Left ventricle myocardium inferior (tissue), 1 donor: ENCODE measurements at regions of chr11 and their contacts with region 1.

Region 1: GRCh38 chr11:1889224-1890120 is 2.2 kb downstream of the PRR33 start:
- DNase-seq: no peak
- H3K4me3 ChIP-seq: no peak overlapping the region
- H3K27ac ChIP-seq: no peak overlapping the region
- H3K4me1 ChIP-seq: peaks cover 26% of the 10 kb centered on the region
- H3K27me3 ChIP-seq: no peaks in the 10 kb centered on the region
- CTCF ChIP-seq: no peak

Region 2: DNA sequence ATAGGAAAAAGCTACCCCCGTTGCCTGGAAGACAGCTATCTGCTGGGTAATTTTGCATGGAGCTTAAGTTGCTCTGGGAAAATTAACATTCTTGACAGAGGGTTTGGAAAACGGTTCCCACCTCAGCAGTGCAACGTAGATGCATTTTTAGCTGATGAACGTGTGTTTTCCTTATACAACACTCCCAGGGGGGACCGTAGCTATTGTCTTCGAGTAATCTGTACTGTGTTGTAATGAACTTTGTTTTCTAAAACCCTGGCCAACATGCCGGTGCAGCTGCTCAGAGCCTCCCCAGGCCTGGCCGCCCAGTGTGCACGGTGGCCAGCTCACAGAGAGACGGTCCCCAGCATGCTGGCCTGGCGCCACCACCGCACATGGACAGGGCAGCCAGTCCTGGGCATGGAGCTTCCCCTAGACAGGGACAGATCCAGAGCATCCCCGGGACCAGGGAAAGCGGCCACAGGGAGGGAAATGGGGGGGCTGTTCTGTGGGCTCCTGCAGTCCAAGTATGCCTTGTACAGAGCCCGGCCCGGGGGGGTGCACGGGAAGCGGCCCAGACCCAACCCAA is 32.2 kb after region 1 on chr11:
- intact Hi-C with region 1: loop called (anchors 1 kb)
- DNase-seq: no peak
- H3K4me3 ChIP-seq: peak overlapping the region; percentile 59
- H3K27ac ChIP-seq: peak overlapping the region; percentile 92
- H3K4me1 ChIP-seq: peaks cover 97% of the 10 kb centered on the region
- H3K27me3 ChIP-seq: no peaks in the 10 kb centered on the region
- CTCF ChIP-seq: no peak

Region 3: DNA sequence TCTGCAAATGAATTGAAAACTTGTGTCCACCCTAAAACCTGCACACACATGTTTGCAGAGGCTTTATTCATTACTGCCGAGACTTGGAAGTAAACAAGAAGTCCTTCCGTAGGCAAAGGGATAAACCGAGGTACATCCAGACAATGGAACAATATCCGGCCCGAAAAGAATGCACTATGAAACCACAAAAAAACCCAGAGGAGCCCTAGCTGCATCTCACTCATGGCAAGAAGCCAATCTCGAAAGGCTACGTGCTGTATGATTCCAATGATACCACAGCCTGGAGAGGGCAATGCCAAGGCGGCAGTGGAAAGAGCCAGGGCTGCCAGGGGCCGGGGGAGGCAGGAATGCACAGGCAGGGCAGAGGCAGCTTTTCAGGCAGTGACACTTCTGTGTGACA is 54.5 kb after region 1 on chr11:
- intact Hi-C with region 1: loop called (anchors 10 kb)
- DNase-seq: no peak
- H3K4me3 ChIP-seq: no peak overlapping the region
- H3K27ac ChIP-seq: peak overlapping the region; percentile 75
- H3K4me1 ChIP-seq: peaks cover 19% of the 10 kb centered on the region
- H3K27me3 ChIP-seq: no peaks in the 10 kb centered on the region
- CTCF ChIP-seq: no peak